Body of pancreas (tissue), 4 donors: ENCODE measurements at regions of chrX and their contacts with region 1.

Region 1: DNA sequence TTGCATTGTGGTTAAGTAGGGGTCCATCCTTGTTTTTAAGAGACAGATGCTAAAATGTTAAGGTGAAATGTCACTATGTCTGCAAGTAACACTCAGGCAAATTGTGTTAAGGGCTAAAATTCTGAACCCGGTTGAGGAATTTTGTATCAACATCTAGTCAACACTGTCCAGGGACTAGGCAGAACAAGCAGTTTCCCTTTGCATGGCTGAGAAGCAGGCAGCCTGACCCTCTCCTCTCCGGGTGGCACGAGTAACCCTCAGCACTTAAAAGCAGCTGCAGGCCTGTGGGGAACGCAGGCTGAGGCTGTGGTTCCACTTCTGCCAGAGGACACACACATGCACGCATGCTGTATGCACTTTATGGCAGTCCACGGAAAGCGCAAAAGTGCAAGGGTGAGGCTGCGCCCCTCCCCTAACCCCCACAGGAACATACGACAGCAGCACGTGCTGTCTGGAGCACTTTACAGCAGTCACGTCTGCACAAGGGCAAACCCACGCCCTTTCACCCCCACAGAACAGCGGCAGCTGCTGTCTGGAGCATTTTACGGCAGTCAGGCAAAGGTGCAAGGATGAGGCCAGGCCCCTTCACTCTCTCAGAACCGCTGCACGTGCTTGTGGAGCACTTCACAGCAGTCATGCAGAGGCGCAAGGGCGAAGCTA is 619 bp upstream of the MPC1L start:
- DNase-seq: no peak
- ATAC-seq: no peak
- H3K4me3 ChIP-seq: no peak overlapping the region
- H3K27ac ChIP-seq: no peak overlapping the region
- H3K4me1 ChIP-seq: no peaks in the 10 kb centered on the region
- H3K27me3 ChIP-seq: no peaks in the 10 kb centered on the region
- CTCF ChIP-seq: no peak
- POLR2A ChIP-seq: no peak

Region 2: DNA sequence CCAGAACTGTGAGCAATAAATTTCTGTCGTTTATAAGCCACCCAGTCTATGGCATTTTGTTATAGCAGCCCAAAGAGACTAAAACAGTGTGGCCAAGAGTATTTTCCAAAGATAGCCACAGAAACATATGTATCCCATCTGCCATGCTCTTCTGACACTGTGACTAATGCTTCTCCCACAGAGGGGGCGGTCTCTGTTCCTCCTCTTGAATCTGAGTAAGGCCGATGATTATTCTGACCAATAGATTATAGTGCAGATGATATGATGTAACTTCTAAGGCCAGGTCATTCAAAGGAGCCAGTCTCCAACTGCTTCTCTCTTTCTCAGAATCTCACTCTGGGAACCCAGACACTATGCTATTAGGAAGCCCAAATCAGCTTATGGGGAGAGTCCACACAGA is 1095.6 kb before region 1 on chrX:
- intact Hi-C with region 1: loop called (anchors 10 kb)
- DNase-seq: no peak
- ATAC-seq: no peak
- H3K4me3 ChIP-seq: no peak overlapping the region
- H3K27ac ChIP-seq: no peak overlapping the region
- H3K4me1 ChIP-seq: no peaks in the 10 kb centered on the region
- H3K27me3 ChIP-seq: no peaks in the 10 kb centered on the region
- CTCF ChIP-seq: no peak
- POLR2A ChIP-seq: no peak

Region 3: GRCh38 chrX:39953883-39954282 is 668.7 kb before region 1 on chrX:
- intact Hi-C with region 1: no loop called
- DNase-seq: peak; percentile 75 to 89 (median 86)
- ATAC-seq: peak; percentile 99
- H3K4me3 ChIP-seq: no peak overlapping the region
- H3K27ac ChIP-seq: peak overlapping the region in 2 of 4 donors; percentile 12 to 39
- H3K4me1 ChIP-seq: peaks cover 10% of the 10 kb centered on the region
- H3K27me3 ChIP-seq: no peaks in the 10 kb centered on the region
- CTCF ChIP-seq: no peak
- POLR2A ChIP-seq: no peak

Region 4: GRCh38 chrX:40406330-40406859 is 216.2 kb before region 1 on chrX:
- intact Hi-C with region 1: no loop called
- DNase-seq: no peak
- ATAC-seq: no peak
- H3K4me3 ChIP-seq: no peak overlapping the region
- H3K27ac ChIP-seq: no peak overlapping the region
- H3K4me1 ChIP-seq: peaks cover 9% of the 10 kb centered on the region
- H3K27me3 ChIP-seq: no peaks in the 10 kb centered on the region
- CTCF ChIP-seq: no peak
- POLR2A ChIP-seq: no peak

Region 5: GRCh38 chrX:40465735-40466551 is 156.7 kb before region 1 on chrX:
- intact Hi-C with region 1: no loop called
- DNase-seq: peak in 1 of 4 donors; percentile 33
- ATAC-seq: no peak
- H3K4me3 ChIP-seq: no peak overlapping the region
- H3K27ac ChIP-seq: peak overlapping the region in 2 of 4 donors; percentile 17 to 54
- H3K4me1 ChIP-seq: peaks cover 11% of the 10 kb centered on the region
- H3K27me3 ChIP-seq: no peaks in the 10 kb centered on the region
- CTCF ChIP-seq: no peak
- POLR2A ChIP-seq: no peak